Breast epithelium (tissue), 4 donors: ENCODE measurements at regions of chr14 and their contacts with region 1.

Region 1: DNA sequence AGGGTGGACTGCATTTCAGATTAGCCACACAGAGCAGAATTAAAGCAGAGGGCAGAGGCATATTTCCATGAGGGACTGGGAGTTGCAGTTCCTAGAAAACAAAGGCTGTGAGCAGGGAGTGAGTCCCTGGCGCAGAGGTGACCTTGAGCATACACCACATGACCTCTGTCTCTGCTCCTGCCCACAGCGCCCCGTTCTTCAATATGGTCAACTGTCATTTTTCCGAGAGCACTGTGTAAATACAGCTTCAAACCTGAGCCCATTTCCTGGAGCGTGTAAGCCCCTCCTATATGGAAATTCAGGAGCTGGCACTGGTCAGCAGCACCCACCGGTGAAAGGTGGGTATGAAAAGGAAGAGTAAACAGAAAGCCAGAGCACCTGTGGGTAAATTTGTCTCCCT is 192.2 kb upstream of the PELI2 start:
- DNase-seq: no peak
- H3K4me3 ChIP-seq: no peak overlapping the region
- H3K27ac ChIP-seq: no peak overlapping the region
- H3K4me1 ChIP-seq: no peaks in the 10 kb centered on the region
- H3K27me3 ChIP-seq: no peaks in the 10 kb centered on the region
- CTCF ChIP-seq: no peak
- POLR2A ChIP-seq: no peak

Region 2: DNA sequence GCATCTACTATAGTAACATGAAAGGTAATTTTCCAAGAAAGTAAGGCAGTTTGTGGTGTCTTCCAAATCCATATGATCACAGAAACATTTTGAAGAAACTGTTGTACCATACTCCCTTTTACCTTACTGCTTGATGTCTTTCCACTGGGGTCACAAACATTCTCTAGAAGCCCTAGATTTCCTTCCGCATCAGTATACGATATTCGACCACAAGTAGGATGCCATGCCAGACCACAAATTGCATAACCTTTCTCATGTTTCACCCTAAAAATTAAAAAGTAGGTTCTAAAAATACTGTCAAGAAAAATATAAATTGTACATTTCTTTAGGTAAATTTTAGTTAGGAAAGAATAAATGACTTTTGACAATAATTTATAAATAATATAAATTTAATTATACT is 925.6 kb before region 1 on chr14:
- intact Hi-C with region 1: no loop called
- DNase-seq: no peak
- H3K4me3 ChIP-seq: no peak overlapping the region
- H3K27ac ChIP-seq: no peak overlapping the region
- H3K4me1 ChIP-seq: no peaks in the 10 kb centered on the region
- H3K27me3 ChIP-seq: no peaks in the 10 kb centered on the region
- CTCF ChIP-seq: no peak
- POLR2A ChIP-seq: no peak

Region 3: GRCh38 chr14:55977392-55978150 is 51.6 kb after region 1 on chr14:
- intact Hi-C with region 1: loop called (anchors 2 kb)
- DNase-seq: no peak
- H3K4me3 ChIP-seq: no peak overlapping the region
- H3K27ac ChIP-seq: peak overlapping the region in 1 of 2 donors; percentile 30
- H3K4me1 ChIP-seq: peaks cover 0 to 9% of the 10 kb centered on the region in 2 donors
- H3K27me3 ChIP-seq: no peaks in the 10 kb centered on the region
- CTCF ChIP-seq: no peak
- POLR2A ChIP-seq: no peak